ENCODE measurements at regions of chr12 and their contacts with region 1.

Region 1: GRCh38 chr12:7638760-7639555 is 26.8 kb downstream of the APOBEC1 start:
- DNase-seq: peak; percentile 87
- ATAC-seq: peak; percentile 82
- H3K4me3 ChIP-seq: peak overlapping the region in 3 of 5 experiments; percentile 18 to 25 (median 24)
- H3K4me3 Mint-ChIP-seq: peak overlapping the region; percentile 61
- H3K27ac ChIP-seq: no peak overlapping the region
- H3K27ac Mint-ChIP-seq: no peak overlapping the region
- H3K4me1 ChIP-seq: peaks cover 4 to 14% of the 10 kb centered on the region in 2 donors
- H3K4me1 Mint-ChIP-seq: peaks cover 19% of the 10 kb centered on the region
- H3K27me3 ChIP-seq: peaks cover 0 to 7% (median 1%) of the 10 kb centered on the region in 4 experiments
- H3K27me3 Mint-ChIP-seq: peaks cover 43% of the 10 kb centered on the region
- CTCF ChIP-seq: peak; percentile 90

Region 2: DNA sequence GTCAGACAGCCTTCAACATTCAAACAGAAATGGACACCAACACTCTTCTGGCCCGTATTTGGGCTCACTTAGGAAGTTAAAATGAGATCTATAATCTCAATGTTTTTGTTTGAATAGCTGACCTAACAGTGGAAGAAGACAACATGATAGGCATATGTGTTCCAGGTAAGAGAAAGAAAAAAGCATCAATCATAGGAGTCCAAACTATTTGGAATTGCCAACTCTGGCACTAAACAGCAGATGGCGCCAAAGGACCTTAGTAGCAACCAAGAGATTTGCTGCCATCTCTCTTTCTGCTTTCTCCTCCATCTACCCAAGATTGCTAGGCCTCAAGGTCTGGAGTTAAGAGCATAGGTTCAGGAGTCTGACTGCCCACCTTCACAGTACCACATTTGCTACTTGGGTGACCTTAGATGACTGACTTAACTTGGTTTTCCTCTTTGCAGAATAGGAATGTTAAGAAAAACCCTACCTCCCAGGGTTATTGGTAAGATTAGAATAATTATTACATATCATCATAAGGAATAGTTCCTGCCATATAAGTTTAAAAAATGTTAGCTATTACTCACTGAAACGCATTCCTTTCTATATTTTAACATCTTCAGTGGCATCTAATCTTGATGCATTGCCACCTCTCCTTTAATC is 419.2 kb before region 1 on chr12:
- CTCF ChIA-PET with region 1: interaction called, 80 read pairs
- POLR2A ChIA-PET with region 1: no interaction called
- intact Hi-C with region 1: no loop called
- DNase-seq: peak; percentile 76
- ATAC-seq: peak; percentile 43
- H3K4me3 ChIP-seq: no peak overlapping the region
- H3K4me3 Mint-ChIP-seq: no peak overlapping the region
- H3K27ac ChIP-seq: no peak overlapping the region
- H3K27ac Mint-ChIP-seq: no peak overlapping the region
- H3K4me1 ChIP-seq: no peaks in the 10 kb centered on the region
- H3K4me1 Mint-ChIP-seq: no peaks in the 10 kb centered on the region
- H3K27me3 ChIP-seq: no peaks in the 10 kb centered on the region
- H3K27me3 Mint-ChIP-seq: peaks cover 3% of the 10 kb centered on the region
- CTCF ChIP-seq: peak; percentile 94

Region 3: DNA sequence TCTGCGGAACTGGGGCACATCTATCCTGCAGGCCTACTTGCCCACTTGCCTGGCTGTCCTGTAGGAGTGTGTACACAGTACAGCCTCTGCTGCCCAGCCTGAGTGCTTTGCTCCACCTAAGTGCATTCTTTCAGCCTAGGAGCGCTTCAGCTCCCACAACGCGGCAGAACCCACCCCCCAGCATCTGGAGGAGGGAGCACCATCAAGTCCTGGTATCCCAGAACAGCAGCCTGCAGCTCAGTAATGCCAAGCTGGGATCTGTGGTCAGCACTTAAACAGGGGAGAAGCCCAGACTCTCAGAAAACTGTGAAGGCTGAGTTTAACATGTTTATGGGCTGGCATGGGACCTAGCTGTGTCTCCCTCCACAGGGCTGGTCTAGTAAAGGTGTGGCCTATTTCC is 55.4 kb before region 1 on chr12:
- CTCF ChIA-PET with region 1: no interaction called
- POLR2A ChIA-PET with region 1: no interaction called
- intact Hi-C with region 1: loop called (anchors 1 kb)
- DNase-seq: no peak
- ATAC-seq: no peak
- H3K4me3 ChIP-seq: no peak overlapping the region
- H3K4me3 Mint-ChIP-seq: no peak overlapping the region
- H3K27ac ChIP-seq: no peak overlapping the region
- H3K27ac Mint-ChIP-seq: no peak overlapping the region
- H3K4me1 ChIP-seq: peaks cover 0 to 4% of the 10 kb centered on the region in 2 donors
- H3K4me1 Mint-ChIP-seq: peaks cover 3% of the 10 kb centered on the region
- H3K27me3 ChIP-seq: peaks cover 0 to 5% (median 2%) of the 10 kb centered on the region in 4 experiments
- H3K27me3 Mint-ChIP-seq: peaks cover 24% of the 10 kb centered on the region
- CTCF ChIP-seq: no peak

Measured in B cell (primary cell).